ENCODE measurements at regions of chr17 and their contacts with region 1.

Region 1: GRCh38 chr17:66673668-66674315 is 161.1 kb upstream of the CACNG5 start:
- DNase-seq: peak; percentile 75 to 88 (median 84)
- H3K4me3 ChIP-seq: peak overlapping the region in 1 of 2 donors; percentile 21
- H3K4me3 Mint-ChIP-seq: peak overlapping the region; percentile 42 to 88 (median 74)
- H3K27ac ChIP-seq: peak overlapping the region; percentile 64
- H3K27ac Mint-ChIP-seq: peak overlapping the region; percentile 88 to 97 (median 96)
- H3K4me1 ChIP-seq: peaks cover 43% of the 10 kb centered on the region
- H3K4me1 Mint-ChIP-seq: peaks cover 43 to 79% (median 57%) of the 10 kb centered on the region in 4 donors
- H3K27me3 ChIP-seq: no peaks in the 10 kb centered on the region
- H3K27me3 Mint-ChIP-seq: no peaks in the 10 kb centered on the region

Region 2: DNA sequence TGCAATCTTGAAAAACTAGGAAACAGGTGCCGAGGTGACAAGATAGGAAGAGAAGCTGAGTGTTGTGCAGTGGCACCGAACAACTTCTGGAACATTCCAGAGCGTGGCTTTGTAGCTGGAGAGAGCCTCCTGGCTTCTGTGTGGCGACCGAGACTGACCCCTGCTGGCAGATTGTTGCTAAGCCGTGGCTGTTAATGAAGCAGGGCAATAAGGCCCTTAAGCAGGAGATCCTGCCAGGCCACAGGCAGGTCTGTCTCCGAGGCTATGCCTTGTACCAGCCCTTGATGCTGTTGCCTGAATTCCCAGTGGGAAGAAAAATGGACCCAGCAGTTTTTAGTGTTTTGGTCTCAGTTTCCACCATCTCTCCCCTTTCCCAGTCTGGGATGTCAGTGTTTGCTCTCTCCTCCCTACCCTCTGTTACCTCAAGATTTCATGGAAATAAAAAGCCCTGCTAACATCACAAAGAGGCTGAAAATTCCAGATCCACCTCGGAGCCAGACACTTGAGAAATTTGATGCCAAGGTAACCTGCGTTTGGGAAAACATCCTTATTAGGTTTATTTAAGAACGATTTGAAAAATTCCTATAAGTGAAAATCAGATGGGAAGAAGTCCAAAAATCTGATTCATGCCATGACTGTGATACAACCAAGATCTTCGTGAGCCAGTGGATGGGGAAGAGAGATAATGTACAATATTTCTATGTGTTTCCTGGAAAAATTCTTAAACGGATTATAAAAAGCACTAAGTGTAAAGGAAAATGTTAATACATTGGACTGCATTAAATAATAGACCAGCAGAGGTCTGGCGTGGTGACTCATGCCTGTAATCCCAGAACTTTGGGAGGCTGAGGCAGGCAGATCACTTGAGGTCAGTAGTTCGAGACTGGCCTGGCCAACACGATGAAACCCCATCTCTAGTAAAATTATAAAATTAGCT is 106.3 kb before region 1 on chr17:
- CTCF ChIA-PET with region 1: no interaction called
- POLR2A ChIA-PET with region 1: interaction called, 4 read pairs
- intact Hi-C with region 1: loop called (anchors 1 kb)
- DNase-seq: peak; percentile 60 to 77 (median 62)
- H3K4me3 ChIP-seq: no peak overlapping the region
- H3K4me3 Mint-ChIP-seq: peak overlapping the region in 1 of 8 donors; percentile 21
- H3K27ac ChIP-seq: no peak overlapping the region
- H3K27ac Mint-ChIP-seq: peak overlapping the region in 3 of 7 donors; percentile 8 to 68 (median 9)
- H3K4me1 ChIP-seq: peaks cover 8% of the 10 kb centered on the region
- H3K4me1 Mint-ChIP-seq: peaks cover 21 to 32% (median 26%) of the 10 kb centered on the region in 4 donors
- H3K27me3 ChIP-seq: no peaks in the 10 kb centered on the region
- H3K27me3 Mint-ChIP-seq: no peaks in the 10 kb centered on the region

Measured in CD4-positive, alpha-beta memory T cell (primary cell).